WTC11 (cell line): ENCODE measurements at regions of chr17 and their contacts with region 1.

Region 1: DNA sequence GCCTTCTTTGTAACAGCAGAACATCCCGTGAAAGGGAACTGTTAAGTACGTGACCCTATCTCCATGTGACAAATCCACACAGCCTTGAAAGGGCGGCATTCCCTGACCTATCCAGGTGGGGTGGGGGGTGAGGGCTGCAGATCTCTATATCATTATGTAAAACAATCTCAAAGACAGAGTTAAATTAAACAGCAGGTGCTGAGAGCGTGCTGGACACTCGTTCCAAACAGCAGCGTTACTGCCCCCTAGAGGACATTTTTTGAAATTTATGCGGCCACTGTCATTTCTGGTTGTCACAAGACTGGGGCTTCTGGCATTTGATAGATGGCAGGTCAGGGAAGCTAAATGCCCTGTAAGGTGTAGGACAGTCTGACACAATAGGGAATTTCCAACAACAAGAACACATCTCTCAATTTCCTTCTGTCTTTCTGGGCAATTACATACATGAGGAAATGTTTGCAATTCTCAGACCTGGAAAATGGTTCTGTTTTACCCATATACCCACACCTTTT is 6.7 kb upstream of the SLC25A39 start:
- DNase-seq: peak; percentile 80
- ATAC-seq: peak; percentile 19
- H3K4me3 Mint-ChIP-seq: no peak overlapping the region
- H3K27ac Mint-ChIP-seq: no peak overlapping the region
- H3K4me1 Mint-ChIP-seq: peaks cover 17% of the 10 kb centered on the region
- H3K27me3 Mint-ChIP-seq: peaks cover 3% of the 10 kb centered on the region; the same call in 1 of the 2 replicates
- CTCF ChIP-seq: peak; percentile 76

Region 2: GRCh38 chr17:44218344-44219107 is 112.8 kb before region 1 on chr17:
- CTCF ChIA-PET with region 1: interaction called, 25 read pairs
- POLR2A ChIA-PET with region 1: interaction called, 13 read pairs
- DNase-seq: peak; percentile 72
- ATAC-seq: peak; percentile 30
- H3K4me3 Mint-ChIP-seq: peak overlapping the region; percentile 82
- H3K27ac Mint-ChIP-seq: no peak overlapping the region
- H3K4me1 Mint-ChIP-seq: peaks cover 17% of the 10 kb centered on the region
- H3K27me3 Mint-ChIP-seq: no peaks in the 10 kb centered on the region
- CTCF ChIP-seq: peak; percentile 26; the same call in 1 of the 2 replicates

Region 3: GRCh38 chr17:44287651-44288050 is 43.7 kb before region 1 on chr17:
- CTCF ChIA-PET with region 1: interaction called, 13 read pairs
- POLR2A ChIA-PET with region 1: no interaction called
- DNase-seq: no peak
- ATAC-seq: no peak
- H3K4me3 Mint-ChIP-seq: no peak overlapping the region
- H3K27ac Mint-ChIP-seq: no peak overlapping the region
- H3K4me1 Mint-ChIP-seq: peaks cover 6% of the 10 kb centered on the region
- H3K27me3 Mint-ChIP-seq: no peaks in the 10 kb centered on the region; the same call in 1 of the 2 replicates
- CTCF ChIP-seq: no peak

Region 4: DNA sequence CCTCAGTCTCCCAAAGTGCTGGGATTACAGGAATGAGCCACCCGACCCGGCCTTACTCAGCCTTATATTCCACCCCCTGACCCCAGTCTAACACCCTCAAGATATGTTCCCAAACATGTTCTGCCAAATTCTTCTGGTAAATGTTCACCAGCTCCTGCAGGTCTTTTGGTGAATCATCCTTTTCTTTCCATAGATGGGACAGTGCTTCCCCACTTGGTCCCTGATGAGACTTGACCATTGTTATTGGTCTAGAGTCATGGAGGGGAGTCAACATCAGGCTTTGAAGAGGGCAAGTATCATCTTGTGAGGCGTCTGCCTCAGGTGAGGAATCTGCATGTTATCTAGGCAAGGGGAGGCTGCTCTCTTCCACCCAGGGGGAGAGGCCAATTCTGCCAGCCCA is 33.3 kb before region 1 on chr17:
- CTCF ChIA-PET with region 1: no interaction called
- POLR2A ChIA-PET with region 1: no interaction called
- DNase-seq: no peak
- ATAC-seq: peak; percentile 34
- H3K4me3 Mint-ChIP-seq: no peak overlapping the region
- H3K27ac Mint-ChIP-seq: peak overlapping the region; percentile 5; the same call in 1 of the 2 replicates
- H3K4me1 Mint-ChIP-seq: no peaks in the 10 kb centered on the region
- H3K27me3 Mint-ChIP-seq: no peaks in the 10 kb centered on the region
- CTCF ChIP-seq: no peak

Region 5: GRCh38 chr17:44308320-44308818 is 22.9 kb before region 1 on chr17 and contains the start of gene RUNDC3A:
- CTCF ChIA-PET with region 1: interaction called, 42 read pairs
- POLR2A ChIA-PET with region 1: no interaction called
- DNase-seq: peak; percentile 96
- ATAC-seq: peak; percentile 91
- H3K4me3 Mint-ChIP-seq: peak within 1 kb of the TSS; percentile 69
- H3K27ac Mint-ChIP-seq: peak within 1 kb of the TSS; percentile 72; the same call in 1 of the 2 replicates
- H3K4me1 Mint-ChIP-seq: peaks cover 41% of the 10 kb centered on the region
- H3K27me3 Mint-ChIP-seq: peaks cover 9% of the 10 kb centered on the region
- CTCF ChIP-seq: no peak
- total RNA-seq, gene RUNDC3A: 5.1 to 6.5 TPM (median 5.2 TPM) in 3 replicates

Region 6: DNA sequence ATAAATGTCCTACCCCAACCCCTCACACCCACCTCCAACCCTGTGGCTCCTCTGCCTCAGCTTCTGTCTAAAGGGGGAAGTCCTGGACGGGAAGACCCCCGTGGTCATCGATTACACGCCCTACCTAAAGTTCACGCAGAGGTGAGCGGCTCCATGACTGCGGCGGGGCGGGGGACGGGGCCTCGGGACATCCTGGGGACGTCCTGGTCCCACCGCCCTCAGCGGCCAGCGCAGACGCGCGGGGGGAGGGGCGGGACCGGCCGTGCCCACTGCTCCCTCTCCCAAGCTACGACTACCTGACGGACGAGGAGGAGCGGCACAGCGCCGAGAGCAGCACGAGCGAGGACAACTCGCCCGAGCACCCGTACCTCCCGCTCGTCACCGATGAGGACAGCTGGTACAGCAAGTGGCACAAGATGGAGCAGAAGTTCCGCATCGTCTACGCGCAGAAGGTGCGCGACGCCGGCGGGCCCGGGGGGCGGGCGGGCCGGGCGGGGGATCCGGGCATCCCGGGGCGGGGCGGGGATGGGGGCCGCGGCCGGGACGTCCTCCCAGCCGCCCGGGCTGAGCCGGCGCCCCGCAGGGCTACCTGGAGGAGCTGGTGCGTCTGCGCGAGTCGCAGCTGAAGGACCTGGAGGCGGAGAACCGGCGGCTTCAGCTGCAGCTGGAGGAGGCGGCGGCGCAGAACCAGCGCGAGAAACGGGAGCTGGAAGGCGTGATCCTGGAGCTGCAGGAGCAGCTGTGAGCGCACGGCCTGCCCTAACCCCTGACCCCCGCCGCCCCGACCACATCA is 16.2 kb before region 1 on chr17:
- CTCF ChIA-PET with region 1: interaction called, 42 read pairs
- POLR2A ChIA-PET with region 1: interaction called, 4 read pairs
- DNase-seq: peak; percentile 76
- ATAC-seq: peak; percentile 13
- H3K4me3 Mint-ChIP-seq: peak overlapping the region; percentile 79
- H3K27ac Mint-ChIP-seq: no peak overlapping the region
- H3K4me1 Mint-ChIP-seq: peaks cover 39% of the 10 kb centered on the region
- H3K27me3 Mint-ChIP-seq: peaks cover 37% of the 10 kb centered on the region
- CTCF ChIP-seq: no peak

Region 7: DNA sequence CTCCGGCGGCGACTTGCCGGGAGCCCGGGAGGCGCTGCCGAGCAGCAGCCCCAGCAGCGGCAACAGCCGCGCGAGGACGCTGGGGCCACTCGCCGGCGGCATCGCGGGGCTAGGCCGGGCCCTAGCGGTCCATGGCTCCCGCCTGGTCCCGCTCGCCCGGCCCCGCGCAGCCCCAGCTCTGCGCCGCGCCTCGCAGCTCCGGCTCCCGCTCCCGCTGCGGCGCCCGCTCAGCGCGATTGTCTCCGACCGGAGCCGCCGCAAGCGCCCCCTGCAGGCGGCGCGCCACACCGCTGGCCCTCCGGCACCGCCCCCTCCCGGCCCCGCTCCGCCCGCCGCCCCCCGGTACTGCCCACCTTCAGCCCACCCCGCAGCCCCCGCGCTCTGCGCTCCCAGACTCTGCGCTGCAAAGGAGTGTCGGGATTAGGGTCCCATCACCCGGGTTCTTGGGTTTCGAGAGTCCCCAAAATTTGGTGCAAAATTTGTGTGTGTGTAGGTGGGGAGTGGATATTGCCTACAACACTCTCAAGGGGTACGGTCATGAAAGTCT is 32.4 kb after region 1 on chr17 and contains the start of gene FAM171A2:
- CTCF ChIA-PET with region 1: interaction called, 16 read pairs
- POLR2A ChIA-PET with region 1: no interaction called
- DNase-seq: peak; percentile 79
- ATAC-seq: peak; percentile 76
- H3K4me3 Mint-ChIP-seq: peak within 1 kb of the TSS; percentile 74
- H3K27ac Mint-ChIP-seq: no peak within 1 kb of the TSS
- H3K4me1 Mint-ChIP-seq: peaks cover 22% of the 10 kb centered on the region
- H3K27me3 Mint-ChIP-seq: peaks cover 42% of the 10 kb centered on the region
- CTCF ChIP-seq: peak; percentile 79
- total RNA-seq, gene FAM171A2: 28.2 to 29.9 TPM (median 28.5 TPM) in 3 replicates

Region 8: GRCh38 chr17:44758414-44759085 is 427.2 kb after region 1 on chr17 and contains the start of gene ADAM11:
- CTCF ChIA-PET with region 1: no interaction called
- POLR2A ChIA-PET with region 1: no interaction called
- DNase-seq: no peak
- ATAC-seq: peak; percentile 56
- H3K4me3 Mint-ChIP-seq: peak within 1 kb of the TSS; percentile 56
- H3K27ac Mint-ChIP-seq: no peak within 1 kb of the TSS
- H3K4me1 Mint-ChIP-seq: no peaks in the 10 kb centered on the region
- H3K27me3 Mint-ChIP-seq: peaks cover 87% of the 10 kb centered on the region
- CTCF ChIP-seq: no peak
- total RNA-seq, gene ADAM11: 3.0 to 4.1 TPM (median 3.2 TPM) in 3 replicates